Endothelial cell of umbilical vein (primary cell): ENCODE measurements at regions of chr2 and their contacts with region 1.

Region 1: GRCh38 chr2:131801210-131801744 is 273.6 kb downstream of the CCDC74A start:
- DNase-seq: no peak
- H3K4me3 ChIP-seq: no peak overlapping the region
- H3K27ac ChIP-seq: no peak overlapping the region
- H3K4me1 ChIP-seq: peaks cover 3% of the 10 kb centered on the region
- H3K27me3 ChIP-seq: no peaks in the 10 kb centered on the region
- CTCF ChIP-seq: no peak
- POLR2A ChIP-seq: no peak

Region 2: GRCh38 chr2:131413148-131413747 is 388.0 kb before region 1 on chr2:
- CTCF ChIA-PET with region 1: interaction called, 5 read pairs
- POLR2A ChIA-PET with region 1: no interaction called
- dilution Hi-C with region 1: no loop called
- intact Hi-C with region 1: loop called (anchors 1 kb)
- DNase-seq: peak; percentile 79
- H3K4me3 ChIP-seq: no peak overlapping the region
- H3K27ac ChIP-seq: no peak overlapping the region
- H3K4me1 ChIP-seq: no peaks in the 10 kb centered on the region
- H3K27me3 ChIP-seq: peaks cover 17 to 25% of the 10 kb centered on the region in 2 experiments
- CTCF ChIP-seq: peak; percentile 42 to 50
- POLR2A ChIP-seq: no peak

Region 3: GRCh38 chr2:131682122-131682944 is 118.9 kb before region 1 on chr2:
- CTCF ChIA-PET with region 1: interaction called, 17 read pairs
- POLR2A ChIA-PET with region 1: no interaction called
- dilution Hi-C with region 1: no loop called
- intact Hi-C with region 1: no loop called
- DNase-seq: peak; percentile 93
- H3K4me3 ChIP-seq: peak overlapping the region; percentile 57 to 85 (median 81)
- H3K27ac ChIP-seq: peak overlapping the region; percentile 91
- H3K4me1 ChIP-seq: peaks cover 21% of the 10 kb centered on the region
- H3K27me3 ChIP-seq: no peaks in the 10 kb centered on the region
- CTCF ChIP-seq: peak; percentile 10 to 52
- POLR2A ChIP-seq: peak; percentile 98